Activated CD4-positive, alpha-beta memory T cell treated with anti-CD3 and anti-CD28 coated beads, Interleukin-2, amount 10 ng/mL, durations not matched to agents 7 days and 5 days (primary cell): ENCODE measurements at regions of chr1 and their contacts with region 1.

Region 1: GRCh38 chr1:86833461-86834215 is 80.3 kb downstream of the SELENOF start:
- DNase-seq: peak; percentile 56
- H3K4me3 Mint-ChIP-seq: no peak overlapping the region
- H3K27ac Mint-ChIP-seq: no peak overlapping the region
- H3K4me1 Mint-ChIP-seq: no peaks in the 10 kb centered on the region
- H3K27me3 Mint-ChIP-seq: peaks cover 4% of the 10 kb centered on the region

Region 2: GRCh38 chr1:86704458-86704971 is 129.1 kb before region 1 on chr1 and contains the start of gene SH3GLB1:
- CTCF ChIA-PET with region 1: no interaction called
- POLR2A ChIA-PET with region 1: no interaction called
- DNase-seq: peak; percentile 90
- H3K4me3 Mint-ChIP-seq: peak within 1 kb of the TSS; percentile 97
- H3K27ac Mint-ChIP-seq: peak within 1 kb of the TSS; percentile 94
- H3K4me1 Mint-ChIP-seq: peaks cover 46% of the 10 kb centered on the region
- H3K27me3 Mint-ChIP-seq: no peaks in the 10 kb centered on the region
- total RNA-seq, gene SH3GLB1: 79.6 to 82.8 TPM

Region 3: DNA sequence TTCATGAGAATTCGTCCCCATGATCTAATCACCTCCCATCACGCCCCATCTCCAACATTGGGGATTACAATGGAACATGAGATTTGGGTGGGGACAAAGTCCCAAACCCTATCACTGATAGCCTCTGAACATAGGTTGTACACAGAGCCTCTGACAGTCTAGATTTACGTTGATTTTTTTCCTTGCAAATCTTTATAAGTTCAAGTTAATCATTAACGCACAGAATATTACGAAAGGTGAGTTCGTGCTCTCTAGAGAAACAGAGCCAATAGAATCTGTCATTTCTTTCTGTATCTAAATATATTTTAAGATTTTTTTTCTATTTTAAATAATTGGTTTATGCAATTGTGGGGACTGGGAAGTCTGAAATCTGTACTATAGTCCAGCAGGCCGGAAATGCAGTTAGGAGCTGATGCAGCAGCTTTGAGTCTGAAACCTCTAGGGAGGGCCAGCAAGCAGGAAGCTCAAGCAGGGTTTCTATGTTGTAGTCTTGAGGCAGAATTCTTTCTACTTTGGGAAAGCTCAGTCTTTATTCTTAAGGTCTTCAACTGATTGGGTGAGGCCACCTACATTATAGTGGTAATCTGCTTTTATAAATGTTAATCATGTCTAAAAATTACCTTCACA is 19.3 kb after region 1 on chr1:
- CTCF ChIA-PET with region 1: no interaction called
- POLR2A ChIA-PET with region 1: no interaction called
- DNase-seq: no peak
- H3K4me3 Mint-ChIP-seq: no peak overlapping the region
- H3K27ac Mint-ChIP-seq: no peak overlapping the region
- H3K4me1 Mint-ChIP-seq: no peaks in the 10 kb centered on the region
- H3K27me3 Mint-ChIP-seq: no peaks in the 10 kb centered on the region

Region 4: GRCh38 chr1:86965012-86965826 is 131.6 kb after region 1 on chr1:
- CTCF ChIA-PET with region 1: interaction called, 11 read pairs
- POLR2A ChIA-PET with region 1: no interaction called
- DNase-seq: no peak
- H3K4me3 Mint-ChIP-seq: no peak overlapping the region
- H3K27ac Mint-ChIP-seq: no peak overlapping the region
- H3K4me1 Mint-ChIP-seq: no peaks in the 10 kb centered on the region
- H3K27me3 Mint-ChIP-seq: no peaks in the 10 kb centered on the region

Region 5: DNA sequence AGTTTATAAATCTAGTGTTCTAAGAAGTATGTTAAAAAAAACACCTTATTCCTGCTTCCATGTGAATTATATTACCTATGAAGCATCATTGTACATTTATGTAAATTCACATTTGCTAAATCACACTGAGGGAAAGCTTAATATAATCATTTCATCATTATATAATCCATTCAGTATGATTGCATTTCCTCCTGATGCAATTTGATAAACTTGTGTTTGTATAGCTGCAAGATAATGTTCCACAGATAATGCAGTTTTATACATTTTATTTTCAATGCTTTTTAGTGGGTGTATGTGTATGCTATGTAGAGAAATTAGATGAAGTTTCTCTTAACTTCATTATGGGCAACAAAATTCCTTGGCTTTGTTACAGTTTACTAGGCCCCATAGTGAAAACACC is 160.4 kb after region 1 on chr1:
- CTCF ChIA-PET with region 1: no interaction called
- POLR2A ChIA-PET with region 1: no interaction called
- DNase-seq: no peak
- H3K4me3 Mint-ChIP-seq: no peak overlapping the region
- H3K27ac Mint-ChIP-seq: no peak overlapping the region
- H3K4me1 Mint-ChIP-seq: no peaks in the 10 kb centered on the region
- H3K27me3 Mint-ChIP-seq: no peaks in the 10 kb centered on the region

Region 6: GRCh38 chr1:87084244-87084836 is 250.7 kb after region 1 on chr1:
- CTCF ChIA-PET with region 1: interaction called, 40 read pairs
- POLR2A ChIA-PET with region 1: interaction called, 3 read pairs
- DNase-seq: no peak
- H3K4me3 Mint-ChIP-seq: no peak overlapping the region
- H3K27ac Mint-ChIP-seq: no peak overlapping the region
- H3K4me1 Mint-ChIP-seq: peaks cover 6% of the 10 kb centered on the region
- H3K27me3 Mint-ChIP-seq: no peaks in the 10 kb centered on the region